ENCODE measurements at regions of chr9 and their contacts with region 1.

Region 1: DNA sequence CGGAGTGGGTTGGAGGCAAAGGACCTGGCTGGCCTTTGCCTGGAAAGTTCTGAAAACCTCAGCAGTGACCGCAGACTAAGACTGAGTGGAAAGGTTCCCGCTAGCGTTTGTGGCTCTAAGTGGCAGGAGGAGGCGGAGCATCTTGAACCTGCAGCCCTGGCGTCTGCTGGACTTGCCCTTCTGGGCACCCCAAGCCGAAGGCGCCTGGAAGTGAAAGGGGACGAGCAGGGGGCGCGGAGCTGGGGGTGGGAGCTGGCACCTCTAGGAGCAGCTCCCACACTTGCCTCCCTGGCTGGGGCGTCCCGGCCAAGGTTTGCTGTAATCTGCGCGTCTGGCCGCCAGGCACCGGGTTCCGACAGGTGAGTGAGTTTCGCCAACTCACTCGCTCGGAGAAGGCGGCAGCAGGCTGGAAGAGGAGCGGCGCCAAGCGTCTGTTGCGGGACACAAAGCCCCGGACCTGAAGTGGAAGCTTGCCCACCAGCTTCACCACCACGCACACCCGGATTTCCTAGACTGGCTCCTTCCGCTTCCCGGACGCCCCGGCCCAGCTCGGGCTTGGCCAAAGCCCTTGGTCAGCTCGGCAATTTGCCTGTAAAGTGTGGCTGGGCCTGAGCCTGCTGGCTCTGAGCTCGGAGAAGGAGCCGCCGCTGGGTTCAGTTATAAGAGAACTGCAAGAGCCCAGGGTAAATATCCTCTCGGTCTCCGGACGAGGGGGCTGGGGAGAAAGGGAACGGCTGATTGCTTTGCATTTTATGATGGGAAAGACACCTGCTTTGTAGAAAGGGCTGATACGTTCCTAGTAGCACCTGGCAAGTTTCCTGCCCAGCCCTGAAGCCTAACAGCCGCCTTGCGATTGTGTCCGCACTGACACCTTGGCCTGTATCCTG is at the start of gene GNA14:
- DNase-seq: peak; percentile 51
- H3K4me3 ChIP-seq: peak within 1 kb of the TSS; percentile 35 to 69 (median 54)
- H3K27ac ChIP-seq: no peak within 1 kb of the TSS
- H3K4me1 ChIP-seq: peaks cover 18% of the 10 kb centered on the region
- H3K27me3 ChIP-seq: peaks cover 1 to 6% of the 10 kb centered on the region in 2 experiments
- CTCF ChIP-seq: no peak
- POLR2A ChIP-seq: no peak
- total RNA-seq, gene GNA14: 3.0 and 3.3 TPM in 2 replicates

Region 2: DNA sequence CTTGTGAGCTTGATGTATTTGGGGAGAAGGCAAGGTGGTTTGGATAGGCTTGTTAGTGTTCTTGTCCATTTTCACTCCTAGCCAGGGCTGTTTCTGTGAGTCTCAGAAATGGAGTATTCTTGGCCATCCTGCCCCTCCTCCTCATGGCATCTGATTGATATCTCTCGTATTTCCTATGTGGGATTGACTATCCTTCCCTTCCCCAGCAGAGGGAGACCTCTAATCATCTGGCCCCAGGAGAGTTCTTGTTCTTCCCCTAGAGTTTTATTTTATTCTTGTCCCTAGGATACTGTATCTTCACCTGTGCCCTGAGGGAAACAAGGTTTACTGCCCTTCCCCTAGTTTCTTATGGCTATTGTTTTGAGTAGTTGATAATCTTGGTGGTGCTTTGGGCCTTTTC is 356.8 kb before region 1 on chr9:
- CTCF ChIA-PET with region 1: no interaction called
- POLR2A ChIA-PET with region 1: no interaction called
- dilution Hi-C with region 1: no loop called
- intact Hi-C with region 1: loop called (anchors 10 kb)
- DNase-seq: peak; percentile 43
- H3K4me3 ChIP-seq: no peak overlapping the region
- H3K27ac ChIP-seq: no peak overlapping the region
- H3K4me1 ChIP-seq: no peaks in the 10 kb centered on the region
- H3K27me3 ChIP-seq: no peaks in the 10 kb centered on the region
- CTCF ChIP-seq: peak; percentile 47 to 48
- POLR2A ChIP-seq: no peak

Region 3: DNA sequence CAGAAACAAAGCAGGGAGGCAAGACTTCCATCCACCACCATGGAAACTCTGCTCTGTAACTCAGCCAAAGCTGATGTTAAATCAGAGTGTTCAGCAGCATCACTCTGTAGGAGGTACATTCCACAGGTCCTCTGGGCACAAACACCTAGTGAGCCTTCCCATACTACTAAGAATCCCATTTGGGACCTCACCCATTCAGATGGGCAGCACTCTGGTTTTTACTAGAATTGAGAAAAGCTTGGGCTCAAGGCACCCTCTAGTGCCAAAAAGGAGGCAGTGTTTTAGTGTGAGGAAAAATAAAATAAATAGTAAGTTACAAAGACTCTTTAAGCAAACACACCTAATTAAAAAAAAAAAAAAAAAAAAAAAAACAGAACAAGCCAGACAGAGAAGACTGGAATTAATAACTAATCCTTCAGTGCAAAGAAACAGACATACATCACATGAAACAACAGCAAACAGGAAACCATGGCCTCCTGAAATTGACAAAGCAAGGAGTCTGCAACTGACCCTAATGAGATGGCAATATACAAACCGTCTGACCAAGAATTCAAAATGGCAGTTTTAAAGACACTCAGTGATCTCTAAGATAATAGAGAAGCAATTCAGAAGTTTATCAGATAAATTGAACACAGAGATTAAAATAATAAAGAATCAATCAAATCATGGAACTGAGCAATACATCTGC is 159.9 kb before region 1 on chr9:
- CTCF ChIA-PET with region 1: interaction called, 12 read pairs
- POLR2A ChIA-PET with region 1: no interaction called
- dilution Hi-C with region 1: no loop called
- intact Hi-C with region 1: no loop called
- DNase-seq: peak; percentile 18
- H3K4me3 ChIP-seq: no peak overlapping the region
- H3K27ac ChIP-seq: no peak overlapping the region
- H3K4me1 ChIP-seq: no peaks in the 10 kb centered on the region
- H3K27me3 ChIP-seq: no peaks in the 10 kb centered on the region
- CTCF ChIP-seq: peak; percentile 23 to 41
- POLR2A ChIP-seq: no peak

Region 4: GRCh38 chr9:77588271-77588937 is 60.1 kb before region 1 on chr9:
- CTCF ChIA-PET with region 1: interaction called, 7 read pairs
- POLR2A ChIA-PET with region 1: no interaction called
- dilution Hi-C with region 1: no loop called
- intact Hi-C with region 1: loop called (anchors 2 kb)
- DNase-seq: peak; percentile 92
- H3K4me3 ChIP-seq: peak overlapping the region in 1 of 3 experiments; percentile 24
- H3K27ac ChIP-seq: peak overlapping the region; percentile 93
- H3K4me1 ChIP-seq: peaks cover 35% of the 10 kb centered on the region
- H3K27me3 ChIP-seq: no peaks in the 10 kb centered on the region
- CTCF ChIP-seq: no peak
- POLR2A ChIP-seq: no peak

Region 5: DNA sequence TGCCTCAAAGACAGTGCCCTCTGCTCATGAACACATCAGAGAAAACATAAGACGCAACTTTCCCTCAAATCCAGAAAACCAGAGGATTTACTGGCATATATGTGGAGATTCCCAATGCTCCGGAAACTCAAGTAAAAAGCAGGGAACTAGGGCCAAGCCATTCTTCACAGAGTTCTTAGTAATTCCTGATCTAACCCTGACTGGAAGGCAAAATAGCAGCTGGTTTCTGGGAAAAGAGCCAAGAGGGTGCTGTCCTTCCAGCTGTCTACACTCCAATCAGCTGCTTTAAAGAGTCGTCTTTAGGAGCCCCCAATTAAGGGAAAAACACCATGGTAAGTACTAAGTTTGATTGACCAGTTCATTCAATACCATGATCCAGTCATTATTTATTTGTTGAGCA is 50.0 kb before region 1 on chr9:
- CTCF ChIA-PET with region 1: interaction called, 16 read pairs
- POLR2A ChIA-PET with region 1: no interaction called
- dilution Hi-C with region 1: no loop called
- intact Hi-C with region 1: no loop called
- DNase-seq: peak; percentile 89
- H3K4me3 ChIP-seq: no peak overlapping the region
- H3K27ac ChIP-seq: no peak overlapping the region
- H3K4me1 ChIP-seq: peaks cover 45% of the 10 kb centered on the region
- H3K27me3 ChIP-seq: no peaks in the 10 kb centered on the region
- CTCF ChIP-seq: no peak
- POLR2A ChIP-seq: no peak

Region 6: GRCh38 chr9:77712533-77713130 is 64.2 kb after region 1 on chr9:
- CTCF ChIA-PET with region 1: interaction called, 3 read pairs
- POLR2A ChIA-PET with region 1: interaction called, 3 read pairs
- dilution Hi-C with region 1: no loop called
- intact Hi-C with region 1: loop called (anchors 2 kb)
- DNase-seq: peak; percentile 81
- H3K4me3 ChIP-seq: peak overlapping the region in 1 of 3 experiments; percentile 19
- H3K27ac ChIP-seq: peak overlapping the region; percentile 97
- H3K4me1 ChIP-seq: peaks cover 69% of the 10 kb centered on the region
- H3K27me3 ChIP-seq: no peaks in the 10 kb centered on the region
- CTCF ChIP-seq: no peak
- POLR2A ChIP-seq: no peak

Region 7: DNA sequence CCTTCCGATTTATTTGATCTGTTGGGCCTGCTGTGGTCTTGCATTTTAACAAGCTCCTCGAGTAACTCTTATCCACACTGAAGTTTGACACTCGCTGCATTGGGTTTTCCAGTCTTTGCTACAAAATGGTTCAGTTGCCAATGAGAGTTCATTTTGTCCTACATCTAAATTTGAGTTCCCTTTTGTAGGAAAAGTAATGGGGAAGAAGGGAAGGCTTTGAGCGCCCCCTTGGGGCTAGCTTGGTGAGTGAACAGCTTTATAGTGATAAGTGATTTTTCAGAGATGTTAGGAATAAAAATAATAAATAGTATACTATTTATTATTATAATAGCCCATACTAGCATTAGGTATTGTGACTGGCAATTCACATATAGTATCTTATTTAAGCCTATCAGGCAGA is 473.0 kb after region 1 on chr9:
- CTCF ChIA-PET with region 1: interaction called, 4 read pairs
- POLR2A ChIA-PET with region 1: no interaction called
- dilution Hi-C with region 1: no loop called
- intact Hi-C with region 1: loop called (anchors 10 kb)
- DNase-seq: peak; percentile 76
- H3K4me3 ChIP-seq: no peak overlapping the region
- H3K27ac ChIP-seq: no peak overlapping the region
- H3K4me1 ChIP-seq: no peaks in the 10 kb centered on the region
- H3K27me3 ChIP-seq: no peaks in the 10 kb centered on the region
- CTCF ChIP-seq: peak; percentile 64 to 65
- POLR2A ChIP-seq: no peak